Breast epithelium (tissue), 4 donors: ENCODE measurements at regions of chr1 and their contacts with region 1.

Region 1: DNA sequence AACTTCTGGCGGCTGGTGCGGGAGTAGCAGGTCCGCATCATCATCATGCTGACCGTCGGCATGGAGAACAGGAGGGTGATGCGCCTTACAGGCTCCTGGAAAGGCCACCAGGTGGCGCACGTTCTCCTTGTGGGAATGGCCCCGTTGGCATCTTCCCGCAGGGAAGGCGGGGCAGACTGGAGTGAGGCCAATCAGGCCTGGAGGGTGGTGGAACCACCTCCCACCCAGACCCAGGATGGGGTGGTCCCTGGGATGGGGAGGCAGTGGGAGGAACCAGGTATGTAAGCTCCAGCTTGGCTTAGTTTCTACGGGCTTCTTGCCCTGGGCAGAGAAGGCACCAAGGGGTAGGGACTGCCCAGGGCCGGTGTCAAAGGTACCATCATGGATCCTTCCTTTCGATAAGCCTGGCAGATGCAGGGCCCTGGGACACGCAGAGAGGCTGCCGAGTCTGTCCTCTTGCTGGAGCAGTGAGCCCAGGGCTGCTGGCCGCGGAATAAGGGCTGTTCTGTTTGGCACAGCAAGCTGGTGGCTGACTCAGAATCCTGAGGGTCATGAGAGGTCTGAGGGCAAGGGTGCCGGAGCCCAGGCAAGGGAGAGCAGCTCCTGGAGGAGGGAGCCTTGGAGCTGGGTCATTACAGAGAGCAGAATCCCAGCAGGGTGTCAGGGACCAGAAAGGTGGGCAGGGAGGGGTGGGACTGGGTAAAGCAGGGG is 8.7 kb upstream of the LGR6 start:
- DNase-seq: peak; percentile 57 to 76
- H3K4me3 ChIP-seq: no peak overlapping the region
- H3K27ac ChIP-seq: no peak overlapping the region
- H3K4me1 ChIP-seq: no peaks in the 10 kb centered on the region
- H3K27me3 ChIP-seq: no peaks in the 10 kb centered on the region
- CTCF ChIP-seq: peak; percentile 36 to 69 (median 57)
- POLR2A ChIP-seq: no peak

Region 2: GRCh38 chr1:200925831-200926230 is 1259.1 kb before region 1 on chr1:
- intact Hi-C with region 1: loop called (anchors 10 kb)
- DNase-seq: no peak
- H3K4me3 ChIP-seq: no peak overlapping the region
- H3K27ac ChIP-seq: no peak overlapping the region
- H3K4me1 ChIP-seq: no peaks in the 10 kb centered on the region
- H3K27me3 ChIP-seq: no peaks in the 10 kb centered on the region
- CTCF ChIP-seq: no peak
- POLR2A ChIP-seq: no peak

Region 3: DNA sequence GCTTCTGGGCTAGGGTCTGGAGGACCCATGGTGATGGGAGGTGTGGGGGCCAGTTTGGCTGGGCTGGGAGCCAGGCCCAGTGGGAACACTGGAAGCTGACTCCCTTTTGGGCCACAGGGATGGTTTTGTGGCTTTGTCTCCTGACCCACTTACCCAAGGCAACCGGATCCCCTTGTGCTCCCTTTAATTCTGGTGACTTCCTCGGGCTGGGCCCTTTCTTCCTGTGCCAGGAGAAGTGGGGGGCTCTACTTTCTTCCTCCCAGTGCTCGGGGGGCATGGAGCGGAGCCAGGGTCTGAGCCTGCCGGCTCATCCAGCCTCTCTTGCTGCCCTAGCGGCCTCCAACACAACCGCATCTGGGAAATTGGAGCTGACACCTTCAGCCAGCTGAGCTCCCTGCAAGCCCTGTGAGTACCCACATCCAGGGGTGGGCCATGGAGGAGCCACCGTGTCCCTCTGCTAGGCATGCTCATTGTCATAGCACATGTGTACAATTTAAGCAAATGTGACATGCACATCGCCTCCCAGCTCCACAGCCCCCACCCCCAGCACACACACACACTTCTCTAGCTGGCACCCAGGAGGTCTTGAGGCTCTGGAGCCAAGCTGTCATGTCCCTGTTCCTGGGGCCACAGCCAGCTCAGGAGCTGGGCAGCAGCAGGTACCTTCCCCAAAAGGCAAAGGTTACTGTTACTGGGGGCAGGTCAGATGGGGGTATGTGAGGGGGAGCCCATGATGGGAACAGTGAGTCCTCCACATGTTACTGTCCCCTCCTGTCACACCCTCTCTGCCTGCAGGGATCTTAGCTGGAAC is 121.8 kb after region 1 on chr1:
- intact Hi-C with region 1: loop called (anchors 5 kb)
- DNase-seq: no peak
- H3K4me3 ChIP-seq: no peak overlapping the region
- H3K27ac ChIP-seq: no peak overlapping the region
- H3K4me1 ChIP-seq: peaks cover 0 to under 1% of the 10 kb centered on the region in 2 donors
- H3K27me3 ChIP-seq: no peaks in the 10 kb centered on the region
- CTCF ChIP-seq: no peak
- POLR2A ChIP-seq: no peak

Region 4: DNA sequence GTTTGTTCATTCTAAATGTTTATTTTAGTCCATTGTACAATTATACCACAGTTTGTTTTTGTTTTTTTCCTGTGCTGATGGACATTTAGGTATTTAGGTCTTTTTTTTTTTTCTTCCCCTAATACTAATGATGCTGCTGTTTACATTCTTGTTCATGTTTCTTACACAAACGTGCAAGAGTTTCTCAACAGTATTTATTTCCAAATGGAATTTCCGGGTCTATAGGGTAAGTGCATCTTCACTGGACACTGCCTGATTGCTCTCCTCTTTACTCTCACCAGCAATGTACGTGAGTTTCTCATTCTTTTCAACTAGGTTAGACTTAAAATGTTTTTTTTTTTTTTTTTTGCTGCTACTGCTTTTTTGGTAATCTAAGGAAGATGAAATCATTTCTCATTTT is 286.3 kb after region 1 on chr1:
- intact Hi-C with region 1: no loop called
- DNase-seq: no peak
- H3K4me3 ChIP-seq: no peak overlapping the region
- H3K27ac ChIP-seq: no peak overlapping the region
- H3K4me1 ChIP-seq: no peaks in the 10 kb centered on the region
- H3K27me3 ChIP-seq: no peaks in the 10 kb centered on the region
- CTCF ChIP-seq: no peak
- POLR2A ChIP-seq: no peak